ENCODE measurements at regions of chr17 and their contacts with region 1.

Region 1: GRCh38 chr17:40775945-40776344 is 3.9 kb upstream of the KRT26 start:
- DNase-seq: no peak
- H3K4me3 Mint-ChIP-seq: no peak overlapping the region
- H3K27ac Mint-ChIP-seq: no peak overlapping the region
- H3K4me1 Mint-ChIP-seq: no peaks in the 10 kb centered on the region
- H3K27me3 Mint-ChIP-seq: peaks cover 83% of the 10 kb centered on the region
- CTCF ChIP-seq: no peak

Region 2: GRCh38 chr17:40598663-40599467 is 177.1 kb before region 1 on chr17:
- CTCF ChIA-PET with region 1: no interaction called
- intact Hi-C with region 1: no loop called
- DNase-seq: no peak
- H3K4me3 Mint-ChIP-seq: no peak overlapping the region
- H3K27ac Mint-ChIP-seq: no peak overlapping the region
- H3K4me1 Mint-ChIP-seq: peaks cover 10% of the 10 kb centered on the region
- H3K27me3 Mint-ChIP-seq: peaks cover 37% of the 10 kb centered on the region
- CTCF ChIP-seq: no peak

Region 3: GRCh38 chr17:40763752-40764151 is 12.2 kb before region 1 on chr17:
- CTCF ChIA-PET with region 1: interaction called, 39 read pairs
- intact Hi-C with region 1: no loop called
- DNase-seq: no peak
- H3K4me3 Mint-ChIP-seq: no peak overlapping the region
- H3K27ac Mint-ChIP-seq: no peak overlapping the region
- H3K4me1 Mint-ChIP-seq: no peaks in the 10 kb centered on the region
- H3K27me3 Mint-ChIP-seq: peaks cover 52% of the 10 kb centered on the region
- CTCF ChIP-seq: no peak

Region 4: DNA sequence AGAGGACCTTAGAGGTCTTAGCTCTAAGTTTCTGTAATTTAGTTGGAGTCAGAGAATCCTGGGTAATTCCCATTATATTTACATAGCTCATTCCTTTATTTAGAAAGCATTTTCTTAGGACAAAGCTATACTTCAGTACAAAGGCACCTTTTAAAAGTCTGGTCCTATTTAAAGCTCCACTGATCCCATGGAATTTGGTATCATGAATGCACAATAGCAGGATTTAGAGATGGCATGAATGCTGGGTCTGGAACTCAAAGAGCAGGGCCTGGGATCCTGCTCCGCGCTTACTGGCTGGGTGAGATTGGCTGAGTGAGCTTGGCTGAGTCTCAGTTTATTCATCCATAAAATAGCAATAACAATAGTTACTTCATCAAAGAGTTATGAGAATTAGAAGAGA is 156.7 kb after region 1 on chr17:
- CTCF ChIA-PET with region 1: no interaction called
- intact Hi-C with region 1: no loop called
- DNase-seq: no peak
- H3K4me3 Mint-ChIP-seq: peak overlapping the region; percentile 71
- H3K27ac Mint-ChIP-seq: peak overlapping the region; percentile 96
- H3K4me1 Mint-ChIP-seq: peaks cover 45% of the 10 kb centered on the region
- H3K27me3 Mint-ChIP-seq: no peaks in the 10 kb centered on the region
- CTCF ChIP-seq: no peak

Measured in Calu3 (cell line).